Calu3 (cell line): ENCODE measurements at regions of chr13 and their contacts with region 1.

Region 1: GRCh38 chr13:24053519-24054251 is 106.8 kb upstream of the SPATA13 start:
- DNase-seq: peak; percentile 73
- H3K4me3 Mint-ChIP-seq: no peak overlapping the region
- H3K27ac Mint-ChIP-seq: peak overlapping the region; percentile 52
- H3K4me1 Mint-ChIP-seq: peaks cover 30% of the 10 kb centered on the region
- H3K27me3 Mint-ChIP-seq: no peaks in the 10 kb centered on the region
- CTCF ChIP-seq: peak; percentile 57

Region 2: DNA sequence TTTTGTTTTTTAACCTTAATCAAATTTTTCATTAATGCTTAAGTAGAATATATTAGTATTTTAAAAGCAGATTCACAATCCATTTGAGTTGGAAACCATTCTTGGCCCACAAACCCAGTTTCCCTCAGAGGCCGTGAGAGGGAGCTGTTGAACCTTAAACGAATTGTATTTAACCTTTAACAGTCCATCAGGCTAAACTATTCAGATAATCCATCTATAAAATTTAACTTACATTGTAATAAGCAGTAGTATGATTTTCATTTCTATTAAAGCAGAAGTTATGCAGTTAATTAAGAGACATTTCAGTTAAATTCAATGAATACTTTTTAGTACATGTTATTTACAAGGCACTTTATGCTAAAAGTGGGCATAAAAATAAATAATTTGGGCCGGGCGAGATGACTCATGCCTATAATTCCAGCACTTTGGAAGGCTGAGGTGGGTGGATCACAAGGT is 33.3 kb before region 1 on chr13:
- CTCF ChIA-PET with region 1: no interaction called
- intact Hi-C with region 1: loop called (anchors 1 kb)
- DNase-seq: peak; percentile 52
- H3K4me3 Mint-ChIP-seq: no peak overlapping the region
- H3K27ac Mint-ChIP-seq: no peak overlapping the region
- H3K4me1 Mint-ChIP-seq: no peaks in the 10 kb centered on the region
- H3K27me3 Mint-ChIP-seq: no peaks in the 10 kb centered on the region
- CTCF ChIP-seq: no peak

Region 3: DNA sequence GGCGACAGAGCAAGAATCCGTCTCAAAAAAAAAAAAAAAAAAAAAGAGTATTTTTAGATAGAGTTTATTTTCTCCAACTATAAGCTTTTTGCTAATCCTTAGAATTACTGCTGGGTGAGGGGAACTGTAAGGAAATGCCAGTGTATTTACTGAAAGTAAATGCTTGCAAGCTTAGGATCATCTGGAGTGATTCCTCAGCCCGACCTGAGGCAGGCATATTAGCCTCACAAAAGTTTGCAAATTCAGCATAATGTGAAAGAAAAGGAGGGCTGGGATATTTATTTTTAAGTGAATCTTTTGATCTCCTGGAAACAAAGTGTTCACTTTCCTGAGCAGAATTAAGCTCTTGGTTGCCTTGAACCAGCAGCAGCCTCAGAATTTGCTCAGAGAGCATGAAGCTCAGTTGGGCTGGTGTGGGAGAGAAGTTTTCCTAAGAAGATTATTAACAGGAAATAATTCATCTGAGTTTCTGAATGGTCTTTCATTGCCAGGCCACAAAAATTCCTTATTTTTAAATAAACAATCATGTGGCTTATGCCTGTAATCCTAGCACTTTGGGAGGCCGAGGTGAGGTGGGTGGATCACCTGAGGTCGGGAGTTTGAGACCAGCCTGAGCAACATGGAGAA is 82.1 kb after region 1 on chr13:
- CTCF ChIA-PET with region 1: no interaction called
- intact Hi-C with region 1: no loop called
- DNase-seq: no peak
- H3K4me3 Mint-ChIP-seq: no peak overlapping the region
- H3K27ac Mint-ChIP-seq: no peak overlapping the region
- H3K4me1 Mint-ChIP-seq: no peaks in the 10 kb centered on the region
- H3K27me3 Mint-ChIP-seq: no peaks in the 10 kb centered on the region
- CTCF ChIP-seq: no peak

Region 4: GRCh38 chr13:24148399-24149305 is 95.0 kb after region 1 on chr13:
- CTCF ChIA-PET with region 1: interaction called, 4 read pairs
- intact Hi-C with region 1: loop called (anchors 1 kb)
- DNase-seq: peak; percentile 80
- H3K4me3 Mint-ChIP-seq: peak overlapping the region; percentile 25
- H3K27ac Mint-ChIP-seq: peak overlapping the region; percentile 90
- H3K4me1 Mint-ChIP-seq: peaks cover 66% of the 10 kb centered on the region
- H3K27me3 Mint-ChIP-seq: no peaks in the 10 kb centered on the region
- CTCF ChIP-seq: no peak

Region 5: GRCh38 chr13:24160454-24161009 is 106.8 kb after region 1 on chr13 and contains the start of gene SPATA13:
- CTCF ChIA-PET with region 1: interaction called, 12 read pairs
- intact Hi-C with region 1: loop called (anchors 2 kb)
- DNase-seq: peak; percentile 95
- H3K4me3 Mint-ChIP-seq: peak within 1 kb of the TSS; percentile 78
- H3K27ac Mint-ChIP-seq: peak within 1 kb of the TSS; percentile 34
- H3K4me1 Mint-ChIP-seq: peaks cover 10% of the 10 kb centered on the region
- H3K27me3 Mint-ChIP-seq: no peaks in the 10 kb centered on the region
- CTCF ChIP-seq: no peak
- total RNA-seq, gene SPATA13: 33.8 and 35.9 TPM in 2 replicates

Region 6: DNA sequence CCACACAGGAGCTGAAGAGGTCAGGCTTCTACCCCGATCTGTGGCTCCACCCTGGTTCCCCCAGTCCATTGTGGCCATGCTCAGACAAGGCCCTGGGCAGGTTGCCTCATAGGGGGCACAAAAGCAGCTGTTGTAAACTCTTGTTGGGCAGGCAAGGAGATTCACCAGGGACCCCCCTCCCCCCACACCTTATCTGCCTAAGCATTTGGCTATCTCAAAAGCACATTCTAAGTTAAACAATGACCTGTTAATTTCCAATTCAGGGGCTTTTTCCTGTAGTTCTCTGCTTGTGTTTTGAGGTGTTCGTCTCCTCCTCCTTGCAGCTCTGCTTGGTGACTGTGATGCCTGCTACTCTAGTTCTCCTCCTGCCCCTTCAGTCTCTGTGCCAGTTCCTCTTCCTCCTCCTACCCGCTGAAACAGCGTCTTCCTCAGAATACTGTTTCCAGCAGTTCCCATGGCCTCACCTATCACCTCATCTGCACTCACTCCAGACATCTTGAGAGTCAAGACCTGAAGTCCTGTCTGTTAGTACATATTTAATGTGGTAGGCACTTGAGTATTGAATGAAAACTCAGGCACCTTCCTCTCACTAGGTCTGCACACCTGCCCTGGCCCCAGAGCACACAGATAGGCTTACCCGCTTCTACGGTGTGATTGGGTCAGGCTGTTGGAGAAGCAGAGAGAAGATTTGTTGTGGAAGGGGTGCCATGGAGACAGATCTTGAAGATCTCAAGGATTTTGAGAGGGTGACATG is 138.5 kb after region 1 on chr13:
- CTCF ChIA-PET with region 1: interaction called, 13 read pairs
- intact Hi-C with region 1: loop called (anchors 1 kb)
- DNase-seq: no peak
- H3K4me3 Mint-ChIP-seq: peak overlapping the region; percentile 61
- H3K27ac Mint-ChIP-seq: peak overlapping the region; percentile 74
- H3K4me1 Mint-ChIP-seq: peaks cover 41% of the 10 kb centered on the region
- H3K27me3 Mint-ChIP-seq: no peaks in the 10 kb centered on the region
- CTCF ChIP-seq: no peak

Region 7: GRCh38 chr13:24220086-24220703 is 166.5 kb after region 1 on chr13:
- CTCF ChIA-PET with region 1: interaction called, 5 read pairs
- intact Hi-C with region 1: loop called (anchors 1 kb)
- DNase-seq: peak; percentile 57
- H3K4me3 Mint-ChIP-seq: no peak overlapping the region
- H3K27ac Mint-ChIP-seq: no peak overlapping the region
- H3K4me1 Mint-ChIP-seq: peaks cover 48% of the 10 kb centered on the region
- H3K27me3 Mint-ChIP-seq: no peaks in the 10 kb centered on the region
- CTCF ChIP-seq: peak; percentile 31